MCF 10A (cell line): ENCODE measurements at regions of chr2 and their contacts with region 1.

Region 1: DNA sequence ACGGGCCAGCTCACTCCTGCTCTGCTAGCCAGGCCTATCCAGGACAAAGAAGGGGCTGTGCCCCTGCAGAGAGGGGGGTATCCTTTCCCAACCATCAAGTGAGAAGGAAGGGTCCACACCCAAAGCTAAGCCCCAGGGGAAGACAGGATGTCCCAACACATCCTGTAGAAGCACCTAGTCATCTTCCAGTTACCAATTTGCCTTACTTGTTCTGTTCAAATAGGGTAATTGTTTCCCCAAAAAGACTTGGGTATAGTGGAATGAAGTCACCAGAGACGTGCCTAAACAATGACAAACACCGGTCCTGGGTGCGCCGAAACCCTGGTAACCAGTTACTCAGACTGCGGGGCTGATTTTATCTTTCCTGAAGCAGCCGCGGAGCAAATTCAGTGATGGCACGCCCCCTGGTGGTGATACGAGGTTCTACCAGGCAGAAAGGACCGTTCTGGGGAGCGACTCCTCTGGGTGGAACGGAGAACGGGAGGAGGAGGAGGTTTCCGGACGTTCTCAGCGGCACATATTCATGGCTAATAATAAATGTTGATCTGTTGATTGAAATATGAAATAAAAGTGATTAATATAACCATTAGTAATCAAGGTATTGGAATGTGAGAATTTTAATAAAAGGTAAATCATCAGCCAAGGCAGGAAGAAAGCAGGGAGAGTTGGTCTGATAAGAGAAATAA is 109.3 kb upstream of the STON1 start:
- DNase-seq: peak; percentile 87
- H3K4me3 Mint-ChIP-seq: peak overlapping the region; percentile 51
- H3K27ac Mint-ChIP-seq: no peak overlapping the region
- H3K4me1 Mint-ChIP-seq: peaks cover 5% of the 10 kb centered on the region
- H3K27me3 Mint-ChIP-seq: no peaks in the 10 kb centered on the region
- CTCF ChIP-seq: peak; percentile 90

Region 2: GRCh38 chr2:47782671-47783485 is 637.8 kb before region 1 on chr2 and contains the start of gene MSH6:
- CTCF ChIA-PET with region 1: no interaction called
- POLR2A ChIA-PET with region 1: no interaction called
- intact Hi-C with region 1: loop called (anchors 10 kb)
- DNase-seq: peak; percentile 86
- H3K4me3 Mint-ChIP-seq: peak within 1 kb of the TSS; percentile 92
- H3K27ac Mint-ChIP-seq: peak within 1 kb of the TSS; percentile 75
- H3K4me1 Mint-ChIP-seq: peaks cover 14% of the 10 kb centered on the region
- H3K27me3 Mint-ChIP-seq: no peaks in the 10 kb centered on the region
- CTCF ChIP-seq: no peak
- total RNA-seq, gene MSH6: 40.3 and 45.3 TPM in 2 replicates